ENCODE measurements at regions of chr12 and their contacts with region 1.

Region 1: DNA sequence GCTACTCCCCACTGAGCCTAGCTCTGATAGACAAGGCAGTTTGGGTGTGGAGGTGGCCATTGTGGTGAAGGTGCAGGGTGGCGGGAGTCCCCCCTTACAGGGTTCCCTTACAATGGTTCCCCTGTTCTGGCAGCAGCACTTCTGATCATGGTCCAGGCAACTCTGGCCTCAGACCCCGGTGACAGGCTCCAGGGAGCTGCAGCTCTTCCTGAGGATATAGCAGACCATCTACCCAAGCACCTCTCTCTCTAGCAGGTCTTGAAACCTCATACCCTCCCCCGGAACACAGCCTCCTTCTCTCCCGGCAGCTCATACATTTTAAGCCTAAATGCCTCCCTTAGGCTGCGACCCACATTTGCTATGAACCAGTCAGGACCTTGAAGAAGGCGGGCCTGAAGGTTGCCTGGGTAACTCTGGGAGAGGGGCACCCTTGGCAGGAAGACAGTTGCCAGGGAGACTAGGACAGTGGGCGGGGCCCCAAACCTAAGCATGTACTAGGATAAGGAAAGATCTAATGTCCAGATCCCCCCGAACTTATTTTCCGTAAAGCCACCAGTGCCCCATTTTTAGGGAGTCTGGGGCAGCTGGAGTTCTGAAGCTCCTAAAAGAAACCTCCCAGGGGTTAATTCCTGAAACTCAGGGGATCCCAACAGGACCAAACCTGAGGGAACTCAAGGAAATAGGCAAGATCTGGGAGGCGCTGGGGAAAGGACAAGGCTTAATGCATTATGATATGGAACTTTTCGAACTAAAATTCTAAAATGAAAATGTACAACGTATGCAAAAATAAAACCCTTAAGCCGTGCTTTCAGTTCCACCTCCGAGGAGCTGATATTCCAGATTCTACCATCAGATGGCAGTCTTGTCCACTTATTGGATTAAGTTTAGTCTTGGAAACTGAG is 4.5 kb upstream of the GDF11 start:
- DNase-seq: peak; percentile 63 to 82 (median 80)
- ATAC-seq: peak; percentile 64 to 85 (median 78)
- H3K4me3 ChIP-seq: peak overlapping the region; percentile 10 to 45 (median 28)
- H3K27ac ChIP-seq: peak overlapping the region; percentile 26 to 78 (median 52)
- H3K4me1 ChIP-seq: peaks cover 0 to 4% (median 0%) of the 10 kb centered on the region in 3 donors
- H3K27me3 ChIP-seq: no peaks in the 10 kb centered on the region
- CTCF ChIP-seq: peak; percentile 61 to 79 (median 76)

Region 2: DNA sequence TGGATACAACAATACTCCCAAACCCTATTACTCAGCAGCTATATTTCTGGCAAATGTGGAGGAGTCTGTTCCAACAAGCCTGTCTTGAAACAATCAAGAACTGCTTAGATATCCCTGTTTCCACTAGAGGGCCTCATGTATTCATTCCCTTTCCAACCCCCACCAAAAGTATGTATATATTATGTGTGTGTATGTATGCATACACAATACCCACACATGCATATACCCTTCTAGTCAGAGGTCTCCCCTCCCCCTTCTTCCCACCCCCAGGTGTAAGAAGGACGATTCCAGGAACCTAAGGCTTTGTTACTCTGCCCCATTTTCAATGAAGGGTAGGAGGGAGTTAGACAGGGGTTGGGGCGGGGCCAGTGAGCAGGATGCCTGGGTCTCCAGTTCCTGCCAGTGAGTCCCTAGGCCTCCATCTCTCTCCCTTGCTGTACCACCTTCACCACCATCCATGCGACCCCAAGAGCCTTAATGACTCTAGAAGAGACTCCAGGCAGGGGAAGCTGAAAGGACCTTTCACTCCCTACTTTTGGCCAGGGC is 192.5 kb after region 1 on chr12 and contains the start of gene DGKA:
- intact Hi-C with region 1: loop called in 1 of 3 experiments (anchors 10 kb)
- DNase-seq: peak in 1 of 6 donors; percentile 44
- ATAC-seq: peak in 3 of 4 donors; percentile 23 to 31 (median 29)
- H3K4me3 ChIP-seq: peak within 1 kb of the TSS; percentile 57 to 78 (median 74)
- H3K27ac ChIP-seq: peak within 1 kb of the TSS; percentile 13 to 73 (median 58)
- H3K4me1 ChIP-seq: peaks cover 15 to 31% (median 23%) of the 10 kb centered on the region in 3 donors
- H3K27me3 ChIP-seq: no peaks in the 10 kb centered on the region
- CTCF ChIP-seq: peak in 3 of 4 donors; percentile 27 to 35 (median 29)
- total RNA-seq, gene DGKA: 15.5 to 34.9 (median 22.8) TPM

Region 3: DNA sequence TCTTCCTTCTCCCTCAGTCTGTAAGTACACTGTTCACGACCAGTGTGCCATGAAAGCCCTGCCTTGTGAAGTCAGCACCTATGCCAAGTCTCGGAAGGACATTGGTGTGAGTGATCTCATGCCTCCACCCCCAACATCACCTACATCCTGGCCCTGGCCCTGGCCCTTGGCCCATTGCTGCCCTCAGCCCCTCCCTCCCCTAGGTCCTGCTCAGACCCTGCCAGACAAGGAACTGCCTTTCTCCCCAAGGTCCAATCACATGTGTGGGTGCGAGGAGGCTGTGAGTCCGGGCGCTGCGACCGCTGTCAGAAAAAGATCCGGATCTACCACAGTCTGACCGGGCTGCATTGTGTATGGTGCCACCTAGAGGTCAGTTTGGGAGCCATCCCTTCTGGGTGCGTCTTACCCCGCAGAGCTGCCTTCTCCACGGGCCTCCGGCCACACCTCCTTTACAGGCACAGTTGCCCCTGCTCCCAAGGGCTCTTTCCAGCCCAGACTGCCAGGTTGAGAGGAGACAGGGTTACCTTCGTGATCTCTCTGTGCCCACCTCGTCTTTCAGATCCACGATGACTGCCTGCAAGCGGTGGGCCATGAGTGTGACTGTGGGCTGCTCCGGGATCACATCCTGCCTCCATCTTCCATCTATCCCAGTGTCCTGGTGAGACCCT is 201.8 kb after region 1 on chr12:
- intact Hi-C with region 1: loop called in 2 of 3 experiments (anchors 5 to 10 kb)
- DNase-seq: peak; percentile 78 to 89 (median 84)
- ATAC-seq: peak; percentile 92 to 99 (median 98)
- H3K4me3 ChIP-seq: peak overlapping the region in 1 of 4 donors; percentile 10
- H3K27ac ChIP-seq: peak overlapping the region; percentile 13 to 50 (median 30)
- H3K4me1 ChIP-seq: peaks cover 0 to 6% (median 5%) of the 10 kb centered on the region in 3 donors
- H3K27me3 ChIP-seq: no peaks in the 10 kb centered on the region
- CTCF ChIP-seq: peak; percentile 83 to 89 (median 84)

Region 4: GRCh38 chr12:56029666-56030293 is 291.4 kb after region 1 on chr12:
- intact Hi-C with region 1: loop called in 1 of 3 experiments (anchors 10 kb)
- DNase-seq: peak in 3 of 6 donors; percentile 31 to 53 (median 38)
- ATAC-seq: peak; percentile 77 to 96 (median 90)
- H3K4me3 ChIP-seq: no peak overlapping the region
- H3K27ac ChIP-seq: peak overlapping the region in 1 of 4 donors; percentile 33
- H3K4me1 ChIP-seq: peaks cover 0 to 8% (median 5%) of the 10 kb centered on the region in 3 donors
- H3K27me3 ChIP-seq: no peaks in the 10 kb centered on the region
- CTCF ChIP-seq: peak in 3 of 4 donors; percentile 34 to 54 (median 41)